Activated CD4-positive, alpha-beta memory T cell treated with anti-CD3 and anti-CD28 coated beads for 36 hours (primary cell): ENCODE measurements at regions of chr1 and their contacts with region 1.

Region 1: GRCh38 chr1:84620720-84621313 is 46.6 kb upstream of the CTBS start:
- DNase-seq: peak; percentile 87
- H3K4me3 Mint-ChIP-seq: peak overlapping the region; percentile 90
- H3K27ac Mint-ChIP-seq: peak overlapping the region; percentile 85
- H3K4me1 Mint-ChIP-seq: peaks cover 19% of the 10 kb centered on the region
- H3K27me3 Mint-ChIP-seq: peaks cover 1% of the 10 kb centered on the region

Region 2: GRCh38 chr1:84143796-84144565 is 476.8 kb before region 1 on chr1 and contains the start of gene PRKACB:
- CTCF ChIA-PET with region 1: interaction called, 9 read pairs
- POLR2A ChIA-PET with region 1: no interaction called
- intact Hi-C with region 1: loop called (anchors 2 kb)
- DNase-seq: no peak
- H3K4me3 Mint-ChIP-seq: peak within 1 kb of the TSS; percentile 89
- H3K27ac Mint-ChIP-seq: peak within 1 kb of the TSS; percentile 98
- H3K4me1 Mint-ChIP-seq: peaks cover 47% of the 10 kb centered on the region
- H3K27me3 Mint-ChIP-seq: no peaks in the 10 kb centered on the region
- total RNA-seq, gene PRKACB: 20.1 to 22.7 TPM

Region 3: DNA sequence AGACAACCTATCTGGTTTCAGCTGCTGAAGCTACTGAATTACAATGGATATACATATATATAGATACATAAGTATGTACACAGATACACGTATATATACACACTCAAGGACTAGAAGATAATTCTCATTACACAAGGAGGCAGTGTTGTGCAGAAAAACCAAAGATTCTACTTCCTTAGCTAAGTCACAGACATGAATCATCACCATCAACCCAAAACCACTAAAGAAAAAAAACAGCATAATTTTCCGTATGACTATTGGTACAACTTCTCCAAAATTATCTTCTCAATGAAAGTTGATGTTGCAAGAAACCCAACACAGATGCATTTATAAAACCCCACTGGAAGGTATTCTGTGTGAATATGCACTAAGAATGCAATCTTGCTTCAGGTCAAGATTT is 178.6 kb before region 1 on chr1:
- CTCF ChIA-PET with region 1: interaction called, 44 read pairs
- POLR2A ChIA-PET with region 1: interaction called, 3 read pairs
- intact Hi-C with region 1: loop called (anchors 1 kb)
- DNase-seq: no peak
- H3K4me3 Mint-ChIP-seq: peak overlapping the region; percentile 0
- H3K27ac Mint-ChIP-seq: no peak overlapping the region
- H3K4me1 Mint-ChIP-seq: peaks cover 19% of the 10 kb centered on the region
- H3K27me3 Mint-ChIP-seq: peaks cover 2% of the 10 kb centered on the region

Region 4: DNA sequence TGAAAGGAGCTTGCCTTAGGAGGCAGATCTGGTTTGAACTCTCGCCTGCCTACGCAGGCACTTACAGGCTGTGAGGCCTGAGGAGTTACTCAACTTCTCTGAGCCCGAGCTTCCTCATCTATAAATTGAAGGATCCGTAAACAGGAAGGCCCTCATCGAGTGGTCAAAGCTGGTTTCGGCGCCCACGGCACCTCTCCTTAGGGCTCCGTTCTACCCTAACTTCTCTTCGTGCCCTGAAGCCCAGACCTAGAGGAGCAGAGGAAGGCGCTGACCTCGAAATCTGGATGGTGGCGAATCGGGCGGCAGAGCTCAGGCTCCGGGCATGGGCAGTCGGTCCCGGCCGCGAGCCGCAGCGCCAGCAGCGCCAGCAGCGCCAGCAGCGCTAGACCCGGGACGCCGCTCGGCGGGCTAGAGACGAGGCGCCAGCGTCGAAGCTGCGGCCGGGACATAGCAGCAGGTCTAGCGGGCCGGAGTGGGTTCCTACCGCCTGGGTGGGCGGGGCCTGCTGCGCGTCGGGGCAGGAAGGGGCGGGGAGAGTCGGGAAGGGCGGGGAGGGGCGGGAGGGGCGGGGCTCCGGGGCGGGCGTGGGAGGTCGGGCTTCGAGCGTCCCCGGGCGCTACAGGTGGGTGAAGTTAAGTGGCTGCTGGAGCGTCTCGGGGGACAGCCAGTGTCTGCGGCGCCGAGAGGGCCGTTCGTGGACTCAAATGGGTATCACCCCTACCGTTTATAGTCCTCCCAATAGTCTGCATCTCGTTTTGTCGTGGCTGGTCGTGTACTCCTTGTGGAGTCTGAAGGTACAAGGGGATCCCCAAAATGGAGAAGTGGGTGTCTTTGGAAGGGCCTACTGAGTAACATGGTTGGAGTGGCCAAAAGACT is 46.6 kb before region 1 on chr1 and contains the start of gene CTBS:
- CTCF ChIA-PET with region 1: interaction called, 38 read pairs
- POLR2A ChIA-PET with region 1: interaction called, 36 read pairs
- intact Hi-C with region 1: loop called (anchors 1 kb)
- DNase-seq: peak; percentile 90
- H3K4me3 Mint-ChIP-seq: peak within 1 kb of the TSS; percentile 98
- H3K27ac Mint-ChIP-seq: peak within 1 kb of the TSS; percentile 100
- H3K4me1 Mint-ChIP-seq: peaks cover 35% of the 10 kb centered on the region
- H3K27me3 Mint-ChIP-seq: peaks cover 1% of the 10 kb centered on the region
- total RNA-seq, gene CTBS: 22.9 to 24.2 TPM

Region 5: GRCh38 chr1:84690397-84691121 is 69.7 kb after region 1 on chr1 and contains the start of gene SSX2IP:
- CTCF ChIA-PET with region 1: interaction called, 6 read pairs
- POLR2A ChIA-PET with region 1: no interaction called
- intact Hi-C with region 1: loop called (anchors 1 kb)
- DNase-seq: peak; percentile 99
- H3K4me3 Mint-ChIP-seq: peak within 1 kb of the TSS; percentile 94
- H3K27ac Mint-ChIP-seq: peak within 1 kb of the TSS; percentile 80
- H3K4me1 Mint-ChIP-seq: peaks cover 53% of the 10 kb centered on the region
- H3K27me3 Mint-ChIP-seq: peaks cover 2% of the 10 kb centered on the region
- total RNA-seq, gene SSX2IP: 10.9 to 11.6 TPM

Region 6: DNA sequence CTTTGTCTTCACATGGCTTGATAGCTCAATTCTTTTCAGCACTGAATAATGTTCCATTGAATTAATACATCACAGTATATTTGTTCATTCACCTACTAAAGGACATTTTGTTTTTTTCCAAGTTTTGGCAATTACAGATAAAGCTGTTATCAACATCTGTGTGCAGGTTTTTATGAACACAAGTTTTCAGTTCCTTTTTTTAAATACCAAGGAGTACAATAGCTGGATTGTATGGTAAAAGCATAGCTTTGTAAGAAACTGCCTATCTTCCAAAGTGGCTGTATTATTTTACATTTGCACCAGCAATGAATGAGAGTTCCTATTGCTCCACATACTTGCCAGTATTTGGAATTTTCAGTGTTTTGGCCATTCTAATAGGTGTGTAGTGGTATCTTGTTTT is 380.9 kb after region 1 on chr1:
- CTCF ChIA-PET with region 1: no interaction called
- POLR2A ChIA-PET with region 1: no interaction called
- intact Hi-C with region 1: no loop called
- DNase-seq: no peak
- H3K4me3 Mint-ChIP-seq: no peak overlapping the region
- H3K27ac Mint-ChIP-seq: no peak overlapping the region
- H3K4me1 Mint-ChIP-seq: peaks cover 27% of the 10 kb centered on the region
- H3K27me3 Mint-ChIP-seq: peaks cover 12% of the 10 kb centered on the region